Gastrocnemius medialis (tissue), 4 donors: ENCODE measurements at regions of chr6 and their contacts with region 1.

Region 1: GRCh38 chr6:144334131-144334708 is 49.1 kb downstream of the UTRN start:
- DNase-seq: peak; percentile 30 to 62
- ATAC-seq: peak; percentile 83 to 92
- H3K4me3 ChIP-seq: peak overlapping the region; percentile 35 to 56 (median 46)
- H3K27ac ChIP-seq: peak overlapping the region; percentile 78 to 86 (median 84)
- H3K4me1 ChIP-seq: peaks cover 50 to 63% of the 10 kb centered on the region in 2 donors
- H3K27me3 ChIP-seq: no peaks in the 10 kb centered on the region
- CTCF ChIP-seq: no peak
- POLR2A ChIP-seq: no peak

Region 2: DNA sequence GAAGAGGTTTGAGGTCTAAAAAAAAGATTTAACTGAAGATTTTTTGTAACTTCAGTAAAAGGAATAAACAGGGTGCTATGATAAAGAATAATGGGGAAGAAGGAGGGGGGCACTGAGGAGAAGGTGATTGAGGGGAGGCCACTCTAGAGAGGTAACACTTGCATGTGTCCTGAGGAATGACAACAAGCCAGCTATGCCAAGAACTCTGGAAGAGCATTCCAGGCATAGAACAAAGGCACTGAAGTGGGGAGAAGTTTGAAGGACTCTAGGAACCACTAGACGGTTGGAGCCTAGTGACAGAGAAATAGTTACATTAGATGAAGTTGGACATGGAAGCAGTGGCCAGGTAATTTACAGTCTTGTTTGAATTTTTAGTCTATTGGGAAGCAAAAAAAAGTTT is 228.0 kb before region 1 on chr6:
- in situ Hi-C with region 1: no loop called
- intact Hi-C with region 1: no loop called
- DNase-seq: no peak
- ATAC-seq: no peak
- H3K4me3 ChIP-seq: no peak overlapping the region
- H3K27ac ChIP-seq: no peak overlapping the region
- H3K4me1 ChIP-seq: no peaks in the 10 kb centered on the region
- H3K27me3 ChIP-seq: no peaks in the 10 kb centered on the region
- CTCF ChIP-seq: no peak
- POLR2A ChIP-seq: no peak

Region 3: GRCh38 chr6:144265390-144265789 is 68.8 kb before region 1 on chr6:
- in situ Hi-C with region 1: no loop called
- intact Hi-C with region 1: loop called (anchors 5 kb)
- DNase-seq: no peak
- ATAC-seq: no peak
- H3K4me3 ChIP-seq: no peak overlapping the region
- H3K27ac ChIP-seq: peak overlapping the region; percentile 72 to 87 (median 76)
- H3K4me1 ChIP-seq: peaks cover 21 to 26% of the 10 kb centered on the region in 2 donors
- H3K27me3 ChIP-seq: no peaks in the 10 kb centered on the region
- CTCF ChIP-seq: no peak
- POLR2A ChIP-seq: no peak

Region 4: DNA sequence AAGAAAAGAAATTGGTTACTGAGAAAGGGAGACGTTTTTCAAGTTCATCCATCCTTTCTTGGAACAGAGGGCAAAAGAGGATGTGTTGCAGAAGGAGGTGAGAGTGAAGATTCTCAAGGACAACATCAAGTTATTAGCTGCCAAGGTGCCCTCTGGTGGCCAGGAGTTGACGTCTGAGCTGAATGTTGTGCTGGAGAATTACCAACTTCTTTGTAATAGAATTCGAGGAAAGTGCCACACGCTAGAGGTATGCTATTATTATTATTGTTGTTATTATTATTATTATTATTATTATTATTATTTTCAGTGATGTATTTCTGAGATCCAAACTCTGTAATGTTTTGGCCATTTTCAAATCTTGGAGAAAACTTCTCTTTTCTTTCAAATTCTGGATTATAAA is 147.9 kb after region 1 on chr6:
- in situ Hi-C with region 1: no loop called
- intact Hi-C with region 1: loop called (anchors 5 kb)
- DNase-seq: peak; percentile 43 to 68
- ATAC-seq: peak; percentile 37 to 44
- H3K4me3 ChIP-seq: no peak overlapping the region
- H3K27ac ChIP-seq: no peak overlapping the region
- H3K4me1 ChIP-seq: peaks cover 25 to 35% of the 10 kb centered on the region in 2 donors
- H3K27me3 ChIP-seq: no peaks in the 10 kb centered on the region
- CTCF ChIP-seq: peak; percentile 34 to 72 (median 45)
- POLR2A ChIP-seq: no peak

Region 5: DNA sequence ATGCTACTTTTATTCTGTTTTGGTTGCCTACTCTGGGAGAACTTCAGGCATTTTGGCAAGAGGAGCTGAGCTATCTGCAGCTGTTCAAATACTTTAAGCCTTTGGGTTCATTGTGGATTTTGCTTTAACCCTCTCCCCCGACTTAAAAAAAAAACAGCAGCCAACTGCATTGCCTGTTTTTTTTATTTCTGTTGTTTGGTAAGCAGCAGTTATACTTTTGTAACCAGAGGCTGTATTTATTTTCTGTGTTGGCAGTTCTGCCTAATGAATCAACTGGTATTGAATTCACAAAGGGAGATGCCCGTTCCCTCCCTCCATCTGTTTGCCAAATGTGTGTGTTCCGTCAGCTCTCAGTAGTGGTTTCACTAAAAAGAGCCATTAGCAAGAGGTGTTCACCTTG is 434.9 kb after region 1 on chr6:
- in situ Hi-C with region 1: no loop called
- intact Hi-C with region 1: no loop called
- DNase-seq: no peak
- ATAC-seq: peak in 1 of 2 donors; percentile 52
- H3K4me3 ChIP-seq: no peak overlapping the region
- H3K27ac ChIP-seq: peak overlapping the region in 3 of 4 donors; percentile 2 to 46 (median 17)
- H3K4me1 ChIP-seq: peaks cover 14 to 25% of the 10 kb centered on the region in 2 donors
- H3K27me3 ChIP-seq: no peaks in the 10 kb centered on the region
- CTCF ChIP-seq: no peak
- POLR2A ChIP-seq: no peak